HepG2 (cell line): ENCODE measurements at regions of chr5 and their contacts with region 1.

Region 1: DNA sequence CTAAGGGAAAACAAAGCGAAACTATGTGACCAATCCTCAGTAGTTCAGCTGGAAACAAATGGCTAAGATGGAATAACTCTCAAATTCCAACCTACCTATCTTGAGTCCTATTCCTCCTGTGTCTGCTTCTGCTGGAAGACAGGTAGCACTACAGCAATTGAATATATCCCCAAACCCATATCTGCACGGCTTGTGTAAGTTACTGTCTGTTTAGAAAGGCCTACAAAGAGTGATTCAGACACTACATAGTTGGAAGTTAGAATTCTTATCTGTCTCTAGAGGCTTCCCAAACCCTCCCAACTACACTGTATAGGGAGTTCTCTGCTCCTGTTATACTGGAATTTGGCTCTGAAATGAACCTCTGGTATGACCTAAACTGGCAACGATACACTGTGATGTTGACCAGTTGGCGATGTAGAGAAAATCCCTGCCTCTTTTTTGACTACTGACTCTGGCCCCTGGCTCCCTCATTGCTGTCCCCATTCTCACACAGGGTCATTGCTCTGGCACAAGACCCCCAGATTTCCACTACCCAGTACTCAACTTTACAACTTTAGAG is 22.6 kb upstream of the NADK2 start:
- DNase-seq: no peak
- ATAC-seq: peak; percentile 56; the same call in 2 of the 3 replicates
- H3K4me3 ChIP-seq: no peak overlapping the region; a peak in 1 of 6 replicates
- H3K27ac ChIP-seq: no peak overlapping the region
- H3K4me1 ChIP-seq: peaks cover 9% of the 10 kb centered on the region
- H3K27me3 ChIP-seq: no peaks in the 10 kb centered on the region
- CTCF ChIP-seq: no peak
- EP300 ChIP-seq: no peak
- POLR2A ChIP-seq: no peak
- RAD21 ChIP-seq: no peak

Region 2: DNA sequence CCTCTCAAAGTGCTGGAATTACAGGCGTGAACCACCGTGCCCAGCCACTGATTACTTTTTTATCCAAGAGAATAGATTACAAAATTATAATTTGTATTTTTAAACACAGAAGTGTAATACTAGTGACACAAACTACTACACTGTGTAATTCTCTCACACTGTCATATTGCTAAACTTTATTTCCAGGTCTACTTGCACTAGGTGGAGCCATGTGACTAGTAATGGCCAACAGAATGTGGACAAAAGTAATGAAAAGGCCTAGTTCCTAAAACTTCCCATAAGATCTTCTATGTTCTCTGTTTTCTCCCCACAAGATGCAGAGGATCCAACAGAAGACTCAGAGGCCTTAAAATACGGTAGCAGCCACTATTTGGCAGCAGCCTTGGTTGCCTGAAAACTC is 49.8 kb before region 1 on chr5:
- CTCF ChIA-PET with region 1: no interaction called
- POLR2A ChIA-PET with region 1: no interaction called
- in situ Hi-C with region 1: no loop called
- intact Hi-C with region 1: loop called (anchors 2 kb)
- DNase-seq: peak; percentile 19
- ATAC-seq: no peak
- H3K4me3 ChIP-seq: no peak overlapping the region
- H3K27ac ChIP-seq: no peak overlapping the region
- H3K4me1 ChIP-seq: no peaks in the 10 kb centered on the region
- H3K27me3 ChIP-seq: no peaks in the 10 kb centered on the region
- CTCF ChIP-seq: peak; percentile 39
- EP300 ChIP-seq: no peak
- POLR2A ChIP-seq: no peak
- RAD21 ChIP-seq: no peak